ENCODE measurements at regions of chr1 and their contacts with region 1.

Region 1: GRCh38 chr1:226662642-226663326 is 76.3 kb downstream of the ITPKB start:
- DNase-seq: peak; percentile 95
- H3K4me3 Mint-ChIP-seq: peak overlapping the region; percentile 65
- H3K27ac Mint-ChIP-seq: peak overlapping the region; percentile 96
- H3K4me1 Mint-ChIP-seq: peaks cover 33% of the 10 kb centered on the region
- H3K27me3 Mint-ChIP-seq: no peaks in the 10 kb centered on the region
- CTCF ChIP-seq: no peak

Region 2: DNA sequence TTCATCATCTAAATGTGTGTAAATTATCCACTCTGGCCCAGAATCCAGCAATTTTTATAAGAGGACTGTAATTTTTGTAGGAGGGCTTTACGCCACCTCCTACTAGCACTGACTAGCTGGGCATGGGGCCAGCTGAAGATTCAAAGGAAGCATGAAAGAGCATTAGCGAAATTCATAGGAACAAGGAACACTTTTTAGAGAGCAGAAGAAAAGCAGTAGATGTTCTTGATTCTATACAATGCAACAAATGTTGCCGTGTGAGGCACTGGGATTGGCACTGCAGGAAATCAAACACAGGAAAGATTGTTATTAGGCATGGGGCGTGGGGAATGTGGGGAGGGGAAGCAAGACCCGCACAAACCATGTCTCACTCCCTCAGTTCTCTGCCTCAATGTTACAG is 196.5 kb before region 1 on chr1:
- CTCF ChIA-PET with region 1: no interaction called
- POLR2A ChIA-PET with region 1: no interaction called
- intact Hi-C with region 1: no loop called
- DNase-seq: no peak
- H3K4me3 Mint-ChIP-seq: no peak overlapping the region
- H3K27ac Mint-ChIP-seq: no peak overlapping the region
- H3K4me1 Mint-ChIP-seq: no peaks in the 10 kb centered on the region
- H3K27me3 Mint-ChIP-seq: peaks cover 35% of the 10 kb centered on the region
- CTCF ChIP-seq: no peak

Region 3: DNA sequence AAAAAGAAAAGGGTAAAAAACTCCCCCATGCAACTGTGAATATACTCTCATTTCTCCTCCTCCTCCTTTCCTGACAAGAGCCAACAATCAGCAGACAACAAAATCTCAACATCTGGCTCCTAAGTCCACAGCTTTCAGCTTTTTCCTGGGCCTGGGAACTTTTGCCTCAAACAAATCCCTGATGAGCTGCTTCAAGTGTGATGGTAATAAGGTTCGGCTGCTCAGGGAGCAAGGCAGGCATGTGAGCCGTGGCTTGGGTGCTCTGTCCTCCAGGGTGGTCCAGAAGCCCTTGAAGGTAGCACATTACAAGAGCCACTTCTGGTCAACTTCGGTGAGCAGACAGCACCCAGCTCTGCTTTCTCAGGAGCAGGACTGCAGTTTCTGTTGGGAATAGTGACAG is 30.0 kb after region 1 on chr1:
- CTCF ChIA-PET with region 1: interaction called, 4 read pairs
- POLR2A ChIA-PET with region 1: interaction called, 12 read pairs
- intact Hi-C with region 1: no loop called
- DNase-seq: no peak
- H3K4me3 Mint-ChIP-seq: no peak overlapping the region
- H3K27ac Mint-ChIP-seq: no peak overlapping the region
- H3K4me1 Mint-ChIP-seq: peaks cover 18% of the 10 kb centered on the region
- H3K27me3 Mint-ChIP-seq: no peaks in the 10 kb centered on the region
- CTCF ChIP-seq: no peak

Region 4: GRCh38 chr1:226708342-226708780 is 45.6 kb after region 1 on chr1:
- CTCF ChIA-PET with region 1: interaction called, 6 read pairs
- POLR2A ChIA-PET with region 1: interaction called, 29 read pairs
- intact Hi-C with region 1: loop called (anchors 5 kb)
- DNase-seq: peak; percentile 93
- H3K4me3 Mint-ChIP-seq: peak overlapping the region; percentile 19
- H3K27ac Mint-ChIP-seq: peak overlapping the region; percentile 91
- H3K4me1 Mint-ChIP-seq: peaks cover 29% of the 10 kb centered on the region
- H3K27me3 Mint-ChIP-seq: no peaks in the 10 kb centered on the region
- CTCF ChIP-seq: no peak

Region 5: GRCh38 chr1:226778657-226779058 is 115.9 kb after region 1 on chr1:
- CTCF ChIA-PET with region 1: no interaction called
- POLR2A ChIA-PET with region 1: interaction called, 11 read pairs
- intact Hi-C with region 1: no loop called
- DNase-seq: peak; percentile 99
- H3K4me3 Mint-ChIP-seq: no peak overlapping the region
- H3K27ac Mint-ChIP-seq: peak overlapping the region; percentile 65
- H3K4me1 Mint-ChIP-seq: peaks cover 16% of the 10 kb centered on the region
- H3K27me3 Mint-ChIP-seq: no peaks in the 10 kb centered on the region
- CTCF ChIP-seq: no peak